ENCODE measurements at regions of chr19 and their contacts with region 1.

Region 1: GRCh38 chr19:35066691-35067563 is 25.4 kb downstream of the HPN start:
- DNase-seq: peak; percentile 96
- ATAC-seq: peak; percentile 89
- H3K4me3 Mint-ChIP-seq: peak overlapping the region; percentile 39
- H3K27ac Mint-ChIP-seq: peak overlapping the region; percentile 62
- H3K4me1 Mint-ChIP-seq: peaks cover 17% of the 10 kb centered on the region
- H3K27me3 Mint-ChIP-seq: no peaks in the 10 kb centered on the region

Region 2: GRCh38 chr19:35090506-35091237 is 23.7 kb after region 1 on chr19:
- CTCF ChIA-PET with region 1: interaction called, 8 read pairs
- POLR2A ChIA-PET with region 1: interaction called, 3 read pairs
- intact Hi-C with region 1: loop called in 1 of 2 experiments (anchors 1 kb)
- DNase-seq: peak; percentile 65
- ATAC-seq: peak; percentile 88
- H3K4me3 Mint-ChIP-seq: no peak overlapping the region
- H3K27ac Mint-ChIP-seq: no peak overlapping the region
- H3K4me1 Mint-ChIP-seq: peaks cover 4% of the 10 kb centered on the region
- H3K27me3 Mint-ChIP-seq: peaks cover 6% of the 10 kb centered on the region

Region 3: DNA sequence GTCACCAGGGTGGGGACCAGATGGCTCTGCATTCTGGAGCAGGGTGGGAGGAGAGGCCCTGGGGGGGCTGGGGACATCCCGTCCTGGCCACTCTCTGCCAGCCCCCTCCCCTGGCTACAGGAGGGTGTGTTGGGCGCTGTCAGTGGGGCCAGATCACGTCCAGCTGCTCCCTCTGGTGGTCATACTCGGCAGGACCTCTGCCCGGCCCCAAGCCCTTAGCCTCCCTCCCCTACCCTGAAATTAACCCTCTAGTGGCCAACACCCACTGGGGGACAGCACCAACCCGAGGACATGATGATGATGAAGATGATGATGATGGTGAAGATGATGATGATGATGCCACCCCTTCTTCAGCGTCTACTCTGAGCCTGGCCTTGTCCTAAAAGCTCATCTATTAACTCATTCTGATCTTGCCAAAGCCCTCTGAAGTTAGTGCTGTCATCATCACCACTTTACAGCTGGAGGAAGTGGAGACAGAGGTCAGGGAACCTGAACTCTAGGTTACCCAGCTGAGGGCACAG is 68.5 kb after region 1 on chr19:
- CTCF ChIA-PET with region 1: interaction called, 30 read pairs
- POLR2A ChIA-PET with region 1: no interaction called
- intact Hi-C with region 1: loop called (anchors 1 kb)
- DNase-seq: peak; percentile 83
- ATAC-seq: peak; percentile 95
- H3K4me3 Mint-ChIP-seq: no peak overlapping the region
- H3K27ac Mint-ChIP-seq: no peak overlapping the region
- H3K4me1 Mint-ChIP-seq: peaks cover 4% of the 10 kb centered on the region
- H3K27me3 Mint-ChIP-seq: no peaks in the 10 kb centered on the region